Caco-2 (cell line): ENCODE measurements at regions of chr2 and their contacts with region 1.

Region 1: DNA sequence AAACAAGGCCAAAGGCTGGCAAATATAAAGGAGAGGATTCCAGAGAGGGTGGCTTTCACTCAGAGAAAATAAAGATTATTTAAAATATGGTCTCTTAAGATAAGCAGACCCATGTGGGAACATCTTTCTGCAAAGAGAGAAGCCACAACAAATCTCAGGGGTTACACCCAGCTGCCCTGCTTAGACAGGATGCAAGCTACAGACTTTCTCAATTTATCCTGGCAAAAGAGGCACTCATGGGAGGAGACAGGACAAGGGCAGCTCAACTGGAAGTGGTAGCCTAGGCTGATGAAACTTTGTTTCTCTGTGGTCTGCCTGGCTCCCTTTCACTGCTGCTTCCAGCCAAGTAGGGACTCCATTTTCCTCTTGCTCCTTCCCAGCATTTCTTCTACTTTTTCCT is 25.9 kb upstream of the SULT1C4 start:
- DNase-seq: no peak
- H3K4me3 ChIP-seq: no peak overlapping the region
- H3K4me3 Mint-ChIP-seq: no peak overlapping the region
- H3K27ac Mint-ChIP-seq: no peak overlapping the region
- H3K4me1 ChIP-seq: no peaks in the 10 kb centered on the region
- H3K4me1 Mint-ChIP-seq: no peaks in the 10 kb centered on the region
- H3K27me3 ChIP-seq: no peaks in the 10 kb centered on the region
- H3K27me3 Mint-ChIP-seq: no peaks in the 10 kb centered on the region
- CTCF ChIP-seq: no peak

Region 2: GRCh38 chr2:108184419-108184818 is 167.5 kb before region 1 on chr2:
- CTCF ChIA-PET with region 1: no interaction called
- POLR2A ChIA-PET with region 1: no interaction called
- intact Hi-C with region 1: no loop called
- DNase-seq: no peak
- H3K4me3 ChIP-seq: no peak overlapping the region
- H3K4me3 Mint-ChIP-seq: no peak overlapping the region
- H3K27ac Mint-ChIP-seq: no peak overlapping the region
- H3K4me1 ChIP-seq: no peaks in the 10 kb centered on the region
- H3K4me1 Mint-ChIP-seq: peaks cover 1% of the 10 kb centered on the region
- H3K27me3 ChIP-seq: no peaks in the 10 kb centered on the region
- H3K27me3 Mint-ChIP-seq: no peaks in the 10 kb centered on the region
- CTCF ChIP-seq: peak; percentile 39 to 57

Region 3: GRCh38 chr2:108215794-108216211 is 136.1 kb before region 1 on chr2:
- CTCF ChIA-PET with region 1: no interaction called
- POLR2A ChIA-PET with region 1: no interaction called
- intact Hi-C with region 1: loop called (anchors 1 kb)
- DNase-seq: peak; percentile 46 to 48
- H3K4me3 ChIP-seq: no peak overlapping the region
- H3K4me3 Mint-ChIP-seq: no peak overlapping the region
- H3K27ac Mint-ChIP-seq: no peak overlapping the region
- H3K4me1 ChIP-seq: peaks cover 5% of the 10 kb centered on the region; the same call in 1 of the 2 replicates
- H3K4me1 Mint-ChIP-seq: no peaks in the 10 kb centered on the region
- H3K27me3 ChIP-seq: no peaks in the 10 kb centered on the region
- H3K27me3 Mint-ChIP-seq: no peaks in the 10 kb centered on the region
- CTCF ChIP-seq: peak; percentile 23 to 49

Region 4: DNA sequence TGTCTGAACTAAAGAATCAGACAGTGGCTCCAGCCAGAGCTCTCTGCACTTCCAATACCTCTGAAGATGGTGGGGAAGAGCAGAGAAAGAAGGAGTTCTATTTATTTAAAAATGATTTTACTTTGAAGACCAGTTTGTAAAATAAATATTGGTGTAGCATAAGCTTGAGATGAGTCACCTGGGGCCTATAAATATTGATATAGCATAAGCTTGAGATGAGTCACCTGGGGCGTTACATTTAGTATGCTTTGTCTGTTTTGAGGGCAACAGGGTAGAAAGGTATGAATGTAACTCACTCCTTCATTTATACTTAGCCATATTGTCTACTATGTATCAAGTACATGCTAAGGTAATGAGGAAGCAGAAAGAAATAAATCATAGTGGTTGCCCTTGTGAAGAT is 18.2 kb after region 1 on chr2:
- CTCF ChIA-PET with region 1: no interaction called
- POLR2A ChIA-PET with region 1: no interaction called
- intact Hi-C with region 1: no loop called
- DNase-seq: peak in 1 of 2 experiments; percentile 49
- H3K4me3 ChIP-seq: no peak overlapping the region
- H3K4me3 Mint-ChIP-seq: no peak overlapping the region
- H3K27ac Mint-ChIP-seq: peak overlapping the region; percentile 39
- H3K4me1 ChIP-seq: peaks cover 15% of the 10 kb centered on the region
- H3K4me1 Mint-ChIP-seq: peaks cover 13% of the 10 kb centered on the region
- H3K27me3 ChIP-seq: no peaks in the 10 kb centered on the region
- H3K27me3 Mint-ChIP-seq: no peaks in the 10 kb centered on the region
- CTCF ChIP-seq: no peak

Region 5: GRCh38 chr2:108477099-108477498 is 125.2 kb after region 1 on chr2:
- CTCF ChIA-PET with region 1: no interaction called
- POLR2A ChIA-PET with region 1: no interaction called
- intact Hi-C with region 1: loop called (anchors 5 kb)
- DNase-seq: no peak
- H3K4me3 ChIP-seq: no peak overlapping the region
- H3K4me3 Mint-ChIP-seq: no peak overlapping the region
- H3K27ac Mint-ChIP-seq: no peak overlapping the region
- H3K4me1 ChIP-seq: no peaks in the 10 kb centered on the region
- H3K4me1 Mint-ChIP-seq: no peaks in the 10 kb centered on the region
- H3K27me3 ChIP-seq: no peaks in the 10 kb centered on the region
- H3K27me3 Mint-ChIP-seq: no peaks in the 10 kb centered on the region
- CTCF ChIP-seq: no peak